Naive thymus-derived CD4-positive, alpha-beta T cell (primary cell): ENCODE measurements at regions of chr2 and their contacts with region 1.

Region 1: GRCh38 chr2:202634556-202635427 is at the start of gene FAM117B:
- DNase-seq: peak; percentile 90 to 99 (median 98)
- ATAC-seq: peak; percentile 93
- H3K4me3 ChIP-seq: peak within 1 kb of the TSS; percentile 81
- H3K4me3 Mint-ChIP-seq: peak within 1 kb of the TSS in 9 of 10 donors; percentile 93 to 98 (median 97)
- H3K27ac ChIP-seq: peak within 1 kb of the TSS; percentile 81
- H3K27ac Mint-ChIP-seq: peak within 1 kb of the TSS; percentile 92 to 99 (median 96)
- H3K4me1 ChIP-seq: peaks cover 22 to 29% of the 10 kb centered on the region in 2 donors
- H3K4me1 Mint-ChIP-seq: peaks cover 27 to 66% (median 61%) of the 10 kb centered on the region in 7 donors
- H3K27me3 ChIP-seq: no peaks in the 10 kb centered on the region
- H3K27me3 Mint-ChIP-seq: no peaks in the 10 kb centered on the region
- total RNA-seq, gene FAM117B: 12.8 to 57.9 (median 48.8) TPM

Region 2: GRCh38 chr2:200963124-200963917 is 1671.5 kb before region 1 on chr2 and contains the start of gene ORC2:
- CTCF ChIA-PET with region 1: no interaction called
- POLR2A ChIA-PET with region 1: no interaction called
- intact Hi-C with region 1: loop called in 1 of 2 experiments (anchors 10 kb)
- DNase-seq: peak; percentile 92 to 97 (median 95)
- ATAC-seq: peak; percentile 98
- H3K4me3 ChIP-seq: peak within 1 kb of the TSS; percentile 89
- H3K4me3 Mint-ChIP-seq: peak within 1 kb of the TSS; percentile 89 to 100 (median 98)
- H3K27ac ChIP-seq: peak within 1 kb of the TSS; percentile 90
- H3K27ac Mint-ChIP-seq: peak within 1 kb of the TSS; percentile 96 to 100 (median 99)
- H3K4me1 ChIP-seq: peaks cover 21 to 32% of the 10 kb centered on the region in 2 donors
- H3K4me1 Mint-ChIP-seq: peaks cover 40 to 83% (median 70%) of the 10 kb centered on the region in 7 donors
- H3K27me3 ChIP-seq: no peaks in the 10 kb centered on the region
- H3K27me3 Mint-ChIP-seq: no peaks in the 10 kb centered on the region
- total RNA-seq, gene ORC2: 29.8 to 78.0 (median 56.2) TPM

Region 3: GRCh38 chr2:202588647-202589581 is 45.9 kb before region 1 on chr2:
- CTCF ChIA-PET with region 1: interaction called, 5 read pairs
- POLR2A ChIA-PET with region 1: interaction called, 28 read pairs
- intact Hi-C with region 1: loop called (anchors 1 kb)
- DNase-seq: peak; percentile 32 to 82 (median 77)
- ATAC-seq: peak; percentile 96
- H3K4me3 ChIP-seq: no peak overlapping the region
- H3K4me3 Mint-ChIP-seq: peak overlapping the region in 9 of 10 donors; percentile 3 to 76 (median 42)
- H3K27ac ChIP-seq: no peak overlapping the region
- H3K27ac Mint-ChIP-seq: peak overlapping the region in 5 of 9 donors; percentile 7 to 78 (median 64)
- H3K4me1 ChIP-seq: peaks cover 0 to 4% of the 10 kb centered on the region in 2 donors
- H3K4me1 Mint-ChIP-seq: peaks cover 5 to 15% (median 11%) of the 10 kb centered on the region in 7 donors
- H3K27me3 ChIP-seq: no peaks in the 10 kb centered on the region
- H3K27me3 Mint-ChIP-seq: no peaks in the 10 kb centered on the region

Region 4: DNA sequence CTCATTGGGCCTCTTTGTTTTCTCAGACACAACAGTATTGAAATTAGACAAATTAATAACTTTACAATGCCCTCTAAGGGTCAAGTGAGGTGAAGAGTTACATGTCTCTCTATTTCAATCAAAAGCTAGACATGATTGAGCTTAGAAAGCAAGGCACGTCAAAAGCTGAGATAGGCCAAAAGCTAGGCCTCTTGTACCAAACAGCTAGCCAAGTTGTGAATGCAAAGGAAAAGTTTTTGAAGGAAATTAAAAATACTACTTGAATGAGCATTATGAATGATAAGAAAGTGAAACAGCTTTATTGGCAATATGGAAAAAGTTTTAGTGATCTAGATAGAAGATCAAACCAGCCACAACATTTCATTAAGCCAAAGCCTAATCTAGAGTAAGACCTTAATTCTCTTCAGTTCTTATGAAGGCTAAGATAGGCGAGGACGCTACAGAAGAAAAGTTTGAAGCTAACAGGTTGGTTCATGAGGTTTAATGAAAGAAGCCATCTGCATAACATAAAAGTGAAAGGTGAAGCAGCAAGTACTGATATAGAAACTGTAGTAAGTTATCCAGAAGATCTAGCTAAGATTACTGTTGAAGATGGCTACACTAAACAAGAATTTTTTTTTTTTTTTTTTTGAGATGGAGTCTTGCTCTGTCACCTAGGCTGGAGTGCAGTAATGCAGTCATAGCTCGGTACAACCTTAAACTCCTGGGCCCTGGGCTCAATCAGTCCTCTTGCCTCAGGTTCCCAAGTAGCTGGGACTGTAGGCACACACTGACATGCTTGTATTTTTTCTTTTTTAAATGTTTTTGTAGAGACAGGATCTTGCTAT is 65.5 kb after region 1 on chr2:
- CTCF ChIA-PET with region 1: no interaction called
- POLR2A ChIA-PET with region 1: interaction called, 16 read pairs
- intact Hi-C with region 1: loop called in 1 of 2 experiments (anchors 2 kb)
- DNase-seq: peak in 4 of 9 donors; percentile 11 to 33 (median 22)
- ATAC-seq: peak; percentile 57
- H3K4me3 ChIP-seq: no peak overlapping the region
- H3K4me3 Mint-ChIP-seq: peak overlapping the region; percentile 12 to 68 (median 54)
- H3K27ac ChIP-seq: peak overlapping the region; percentile 27
- H3K27ac Mint-ChIP-seq: peak overlapping the region; percentile 60 to 92 (median 83)
- H3K4me1 ChIP-seq: peaks cover 0 to 14% of the 10 kb centered on the region in 2 donors
- H3K4me1 Mint-ChIP-seq: peaks cover 30 to 73% (median 65%) of the 10 kb centered on the region in 7 donors
- H3K27me3 ChIP-seq: no peaks in the 10 kb centered on the region
- H3K27me3 Mint-ChIP-seq: no peaks in the 10 kb centered on the region

Region 5: GRCh38 chr2:202870431-202871299 is 235.9 kb after region 1 on chr2:
- CTCF ChIA-PET with region 1: interaction called, 5 read pairs
- POLR2A ChIA-PET with region 1: interaction called, 15 read pairs
- intact Hi-C with region 1: loop called (anchors 1 kb)
- DNase-seq: peak; percentile 32 to 68 (median 57)
- ATAC-seq: peak; percentile 85
- H3K4me3 ChIP-seq: peak overlapping the region; percentile 84
- H3K4me3 Mint-ChIP-seq: peak overlapping the region; percentile 89 to 98 (median 94)
- H3K27ac ChIP-seq: peak overlapping the region; percentile 60
- H3K27ac Mint-ChIP-seq: peak overlapping the region in 7 of 9 donors; percentile 8 to 84 (median 66)
- H3K4me1 ChIP-seq: peaks cover 0 to 3% of the 10 kb centered on the region in 2 donors
- H3K4me1 Mint-ChIP-seq: peaks cover 0 to 13% (median 7%) of the 10 kb centered on the region in 7 donors
- H3K27me3 ChIP-seq: no peaks in the 10 kb centered on the region
- H3K27me3 Mint-ChIP-seq: no peaks in the 10 kb centered on the region

Region 6: DNA sequence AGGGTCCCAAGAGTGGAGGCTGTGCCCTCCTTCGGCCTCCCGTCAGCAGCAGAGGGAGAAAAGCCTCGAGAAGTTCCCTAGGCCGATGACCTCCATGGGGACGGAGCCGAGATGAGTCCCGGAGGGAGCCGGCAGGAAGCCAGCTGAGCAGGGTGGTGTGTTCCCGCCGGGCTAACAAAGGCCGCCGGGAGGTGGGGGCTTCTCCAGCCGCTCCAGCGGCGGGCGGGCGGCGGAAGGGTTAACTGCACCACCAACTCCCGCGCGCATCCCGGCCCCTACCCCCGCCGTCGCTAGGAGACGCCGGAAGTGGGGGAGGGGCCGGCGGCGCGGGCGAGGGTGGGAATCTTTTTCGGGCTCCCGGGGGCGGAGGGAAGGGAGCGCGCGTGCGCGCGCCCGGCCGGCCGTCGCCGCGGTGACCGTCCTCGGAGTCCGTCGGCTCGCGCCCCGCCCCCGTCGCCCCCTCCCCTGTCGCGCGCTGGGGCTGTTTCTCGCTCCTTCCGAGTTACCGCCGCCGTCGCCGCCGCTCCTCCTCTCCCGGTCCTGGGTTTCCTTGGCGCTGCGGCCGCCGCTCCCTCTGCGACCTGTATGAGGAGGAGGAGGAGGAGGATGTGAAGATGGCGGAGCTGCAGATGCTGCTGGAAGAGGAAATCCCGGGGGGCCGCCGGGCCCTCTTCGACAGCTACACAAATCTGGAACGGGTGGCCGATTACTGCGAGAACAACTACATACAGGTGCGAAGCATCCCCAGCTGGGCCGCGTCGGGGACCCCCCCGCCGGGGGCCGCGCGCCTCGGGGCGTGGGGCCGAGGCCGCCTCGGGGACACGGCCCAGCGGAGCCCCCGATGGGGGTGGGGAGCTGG is 693.3 kb after region 1 on chr2 and contains the start of gene ABI2:
- CTCF ChIA-PET with region 1: no interaction called
- POLR2A ChIA-PET with region 1: no interaction called
- intact Hi-C with region 1: loop called in 1 of 2 experiments (anchors 1 kb)
- DNase-seq: peak; percentile 27 to 81 (median 51)
- ATAC-seq: peak; percentile 71
- H3K4me3 ChIP-seq: peak within 1 kb of the TSS; percentile 84
- H3K4me3 Mint-ChIP-seq: peak within 1 kb of the TSS; percentile 85 to 97 (median 93)
- H3K27ac ChIP-seq: peak within 1 kb of the TSS; percentile 72
- H3K27ac Mint-ChIP-seq: peak within 1 kb of the TSS; percentile 72 to 96 (median 90)
- H3K4me1 ChIP-seq: peaks cover 7 to 15% of the 10 kb centered on the region in 2 donors
- H3K4me1 Mint-ChIP-seq: peaks cover 21 to 40% (median 33%) of the 10 kb centered on the region in 7 donors
- H3K27me3 ChIP-seq: no peaks in the 10 kb centered on the region
- H3K27me3 Mint-ChIP-seq: no peaks in the 10 kb centered on the region
- total RNA-seq, gene ABI2: 19.5 to 41.5 (median 28.2) TPM